Psoas muscle (tissue), 8 donors: ENCODE measurements at regions of chr6 and their contacts with region 1.

Region 1: GRCh38 chr6:109382576-109383437 is 540 bp upstream of the CD164 start:
- DNase-seq: peak; percentile 93 to 97
- ATAC-seq: peak; percentile 88 to 89 (median 89)
- H3K4me3 ChIP-seq: peak overlapping the region; percentile 87
- H3K27ac ChIP-seq: peak overlapping the region; percentile 99
- H3K4me1 ChIP-seq: peaks cover 35% of the 10 kb centered on the region
- H3K27me3 ChIP-seq: no peaks in the 10 kb centered on the region
- CTCF ChIP-seq: peak; percentile 53

Region 2: DNA sequence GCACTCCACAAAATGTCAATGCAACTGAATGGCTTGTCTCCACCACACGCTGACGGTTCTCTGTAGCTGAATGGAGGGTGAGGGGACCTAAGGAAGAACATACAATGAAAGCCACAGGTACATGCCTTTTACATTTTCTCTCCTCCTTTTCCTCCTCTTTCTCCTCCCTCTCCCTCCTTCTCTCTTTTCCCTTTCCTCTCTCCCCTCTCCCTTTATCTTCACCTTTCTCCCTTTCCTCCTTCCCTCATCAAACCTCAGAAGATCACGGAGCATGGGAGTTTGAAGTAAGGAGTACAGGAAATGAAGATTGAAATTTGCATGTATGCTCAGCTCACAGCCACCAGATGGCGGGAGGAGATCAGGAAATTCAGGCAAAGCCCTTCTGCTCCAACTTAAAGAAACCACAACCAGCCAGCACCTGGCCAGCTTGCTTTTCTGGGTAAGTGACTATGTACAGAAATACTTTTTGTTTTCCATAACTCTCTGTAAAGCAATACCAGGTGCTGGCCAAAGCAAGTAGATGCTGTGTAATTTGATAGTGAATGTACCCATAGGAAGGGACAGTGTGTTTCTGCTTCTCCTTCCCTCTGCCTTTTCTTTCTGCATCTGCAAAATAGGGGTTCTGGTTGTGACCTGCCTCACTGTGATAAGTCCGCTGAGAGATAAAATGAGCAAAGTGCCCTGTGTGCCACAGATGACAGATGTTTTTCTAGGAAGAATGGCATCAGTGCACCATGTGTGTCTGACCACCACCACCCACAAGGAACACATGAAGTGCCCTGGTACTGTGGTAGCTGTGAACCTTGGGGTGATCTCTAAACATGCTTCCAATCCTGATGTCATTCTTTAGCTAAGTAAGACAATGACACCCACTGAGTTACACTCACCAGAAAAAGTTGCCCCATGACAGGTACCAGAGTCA is 840.7 kb before region 1 on chr6:
- intact Hi-C with region 1: loop called in 1 of 2 experiments (anchors 10 kb)
- DNase-seq: peak; percentile 62 to 83
- ATAC-seq: peak; percentile 86 to 94 (median 90)
- H3K4me3 ChIP-seq: peak overlapping the region; percentile 14
- H3K27ac ChIP-seq: peak overlapping the region; percentile 67
- H3K4me1 ChIP-seq: peaks cover 28% of the 10 kb centered on the region
- H3K27me3 ChIP-seq: no peaks in the 10 kb centered on the region
- CTCF ChIP-seq: peak; percentile 88

Region 3: GRCh38 chr6:109095027-109095834 is 287.6 kb before region 1 on chr6 and contains the start of gene CEP57L1:
- intact Hi-C with region 1: loop called (anchors 5 to 10 kb)
- DNase-seq: peak; percentile 97 to 99
- ATAC-seq: peak; percentile 73 to 86 (median 83)
- H3K4me3 ChIP-seq: peak within 1 kb of the TSS; percentile 77
- H3K27ac ChIP-seq: peak within 1 kb of the TSS; percentile 98
- H3K4me1 ChIP-seq: peaks cover 30% of the 10 kb centered on the region
- H3K27me3 ChIP-seq: no peaks in the 10 kb centered on the region
- CTCF ChIP-seq: peak; percentile 3
- total RNA-seq, gene CEP57L1: 6.4 to 8.6 (median 6.5) TPM

Region 4: DNA sequence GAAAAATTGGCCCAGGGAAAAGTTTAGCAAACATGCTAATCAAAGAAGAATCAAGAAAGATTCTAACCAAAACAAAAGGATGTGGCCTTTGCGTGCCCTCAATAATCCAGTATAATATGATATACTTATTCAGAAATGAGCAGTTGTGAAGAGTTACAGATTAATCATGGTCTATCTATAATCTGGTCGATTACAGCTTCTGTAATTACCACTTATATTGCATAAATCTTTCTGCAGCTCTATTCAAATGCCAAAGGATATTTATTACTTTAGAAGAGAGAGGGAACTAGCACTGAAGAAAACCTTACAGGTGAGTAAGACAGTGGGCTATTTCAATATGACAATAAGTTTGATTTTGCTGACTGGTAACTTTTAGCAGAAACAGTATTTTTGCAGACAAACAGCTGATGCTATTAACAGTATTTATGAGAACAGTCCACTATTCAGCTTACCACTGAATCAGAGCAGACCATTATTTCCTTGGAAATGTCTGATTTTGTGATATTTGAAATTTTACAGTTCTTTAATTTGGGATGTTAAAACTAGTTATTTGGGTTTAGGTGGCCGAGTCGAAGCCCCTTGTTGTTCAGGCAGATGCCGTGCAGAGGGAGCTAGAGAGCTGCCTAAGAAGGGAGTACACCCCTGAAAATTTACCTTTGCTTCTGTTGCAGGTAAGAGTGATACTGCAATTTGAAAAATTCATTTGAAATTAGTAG is 195.2 kb before region 1 on chr6:
- intact Hi-C with region 1: loop called (anchors 2 kb)
- DNase-seq: peak in 1 of 2 donors; percentile 26
- ATAC-seq: peak; percentile 76 to 95 (median 89)
- H3K4me3 ChIP-seq: no peak overlapping the region
- H3K27ac ChIP-seq: no peak overlapping the region
- H3K4me1 ChIP-seq: no peaks in the 10 kb centered on the region
- H3K27me3 ChIP-seq: no peaks in the 10 kb centered on the region
- CTCF ChIP-seq: peak; percentile 94

Region 5: GRCh38 chr6:109224116-109224875 is 158.5 kb before region 1 on chr6:
- intact Hi-C with region 1: loop called in 1 of 2 experiments (anchors 5 kb)
- DNase-seq: no peak
- ATAC-seq: peak; percentile 83 to 91 (median 90)
- H3K4me3 ChIP-seq: peak overlapping the region; percentile 24
- H3K27ac ChIP-seq: peak overlapping the region; percentile 92
- H3K4me1 ChIP-seq: peaks cover 24% of the 10 kb centered on the region
- H3K27me3 ChIP-seq: no peaks in the 10 kb centered on the region
- CTCF ChIP-seq: no peak

Region 6: DNA sequence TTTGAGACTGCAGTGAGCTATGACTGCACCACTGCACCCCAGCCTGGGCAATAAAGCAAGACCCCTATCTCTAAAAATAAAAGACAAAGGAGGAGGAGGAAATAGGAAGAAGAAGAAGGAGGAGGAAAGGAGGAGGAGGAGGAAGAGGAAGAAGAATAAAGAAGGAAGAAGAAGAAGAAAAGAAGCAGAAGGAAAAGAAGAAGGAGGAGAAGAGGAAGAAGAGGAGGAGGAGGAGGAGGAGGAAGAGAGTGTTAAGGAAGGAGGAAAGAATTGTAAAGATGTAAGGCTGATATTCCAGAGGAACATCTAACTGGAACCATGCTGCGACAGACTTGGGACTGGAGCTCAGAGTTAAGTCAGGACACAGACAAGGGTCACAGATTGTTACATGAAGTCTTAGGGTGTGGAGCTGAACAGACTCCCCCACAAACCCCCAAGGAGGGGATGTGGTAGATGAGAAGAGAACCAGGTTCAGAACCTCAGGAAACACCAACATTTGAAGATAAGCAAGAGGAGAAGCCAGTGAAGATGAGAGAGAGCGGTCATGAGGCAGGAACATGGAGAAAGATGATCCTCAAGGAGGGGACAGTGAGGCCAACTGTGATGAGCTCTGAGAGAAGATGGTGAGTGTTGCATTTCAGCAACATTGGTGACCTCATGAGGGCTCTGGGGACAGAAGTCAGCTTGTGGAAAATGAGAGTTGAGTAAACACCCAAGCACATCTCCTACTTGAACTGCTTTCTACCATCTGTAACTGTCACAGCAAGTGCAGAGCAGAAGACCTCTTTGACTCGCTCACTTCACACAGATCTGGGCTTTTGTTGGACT is 118.7 kb before region 1 on chr6:
- intact Hi-C with region 1: no loop called
- DNase-seq: no peak
- ATAC-seq: no peak
- H3K4me3 ChIP-seq: no peak overlapping the region
- H3K27ac ChIP-seq: no peak overlapping the region
- H3K4me1 ChIP-seq: no peaks in the 10 kb centered on the region
- H3K27me3 ChIP-seq: no peaks in the 10 kb centered on the region
- CTCF ChIP-seq: no peak

Region 7: GRCh38 chr6:109304284-109305015 is 78.4 kb before region 1 on chr6:
- intact Hi-C with region 1: loop called (anchors 5 kb)
- DNase-seq: peak in 1 of 2 donors; percentile 72
- ATAC-seq: peak; percentile 20 to 83 (median 78)
- H3K4me3 ChIP-seq: no peak overlapping the region
- H3K27ac ChIP-seq: peak overlapping the region; percentile 73
- H3K4me1 ChIP-seq: peaks cover 33% of the 10 kb centered on the region
- H3K27me3 ChIP-seq: no peaks in the 10 kb centered on the region
- CTCF ChIP-seq: no peak

Region 8: GRCh38 chr6:109397020-109397419 is 14.2 kb after region 1 on chr6:
- intact Hi-C with region 1: no loop called
- DNase-seq: no peak
- ATAC-seq: peak; percentile 36 to 77 (median 61)
- H3K4me3 ChIP-seq: no peak overlapping the region
- H3K27ac ChIP-seq: no peak overlapping the region
- H3K4me1 ChIP-seq: no peaks in the 10 kb centered on the region
- H3K27me3 ChIP-seq: no peaks in the 10 kb centered on the region
- CTCF ChIP-seq: peak; percentile 27